AG04450 (cell line): ENCODE measurements at regions of chr13 and their contacts with region 1.

Region 1: GRCh38 chr13:60396783-60397703 is at the start of gene TDRD3:
- DNase-seq: peak; percentile 62
- H3K4me3 ChIP-seq: peak within 1 kb of the TSS; percentile 87
- H3K27ac ChIP-seq: peak within 1 kb of the TSS; percentile 92
- H3K27me3 ChIP-seq: no peaks in the 10 kb centered on the region
- CTCF ChIP-seq: peak; percentile 84
- polyA plus RNA-seq, gene TDRD3: 8.3 and 10.8 TPM in 2 replicates

Region 2: GRCh38 chr13:60411983-60412382 is 14.9 kb after region 1 on chr13:
- CTCF ChIA-PET with region 1: interaction called, 10 read pairs
- POLR2A ChIA-PET with region 1: no interaction called
- DNase-seq: no peak
- H3K4me3 ChIP-seq: no peak overlapping the region
- H3K27ac ChIP-seq: no peak overlapping the region
- H3K27me3 ChIP-seq: no peaks in the 10 kb centered on the region
- CTCF ChIP-seq: no peak

Region 3: GRCh38 chr13:60482012-60482411 is 85.0 kb after region 1 on chr13:
- CTCF ChIA-PET with region 1: no interaction called
- POLR2A ChIA-PET with region 1: no interaction called
- DNase-seq: no peak
- H3K4me3 ChIP-seq: no peak overlapping the region
- H3K27ac ChIP-seq: no peak overlapping the region
- H3K27me3 ChIP-seq: no peaks in the 10 kb centered on the region
- CTCF ChIP-seq: no peak

Region 4: GRCh38 chr13:61316647-61317046 is 919.6 kb after region 1 on chr13:
- CTCF ChIA-PET with region 1: no interaction called
- POLR2A ChIA-PET with region 1: interaction called, 10 read pairs
- DNase-seq: no peak
- H3K4me3 ChIP-seq: no peak overlapping the region
- H3K27ac ChIP-seq: no peak overlapping the region
- H3K27me3 ChIP-seq: no peaks in the 10 kb centered on the region
- CTCF ChIP-seq: no peak